Posterior cingulate gyrus (tissue), 11 donors: ENCODE measurements at regions of chr9 and their contacts with region 1.

Region 1: DNA sequence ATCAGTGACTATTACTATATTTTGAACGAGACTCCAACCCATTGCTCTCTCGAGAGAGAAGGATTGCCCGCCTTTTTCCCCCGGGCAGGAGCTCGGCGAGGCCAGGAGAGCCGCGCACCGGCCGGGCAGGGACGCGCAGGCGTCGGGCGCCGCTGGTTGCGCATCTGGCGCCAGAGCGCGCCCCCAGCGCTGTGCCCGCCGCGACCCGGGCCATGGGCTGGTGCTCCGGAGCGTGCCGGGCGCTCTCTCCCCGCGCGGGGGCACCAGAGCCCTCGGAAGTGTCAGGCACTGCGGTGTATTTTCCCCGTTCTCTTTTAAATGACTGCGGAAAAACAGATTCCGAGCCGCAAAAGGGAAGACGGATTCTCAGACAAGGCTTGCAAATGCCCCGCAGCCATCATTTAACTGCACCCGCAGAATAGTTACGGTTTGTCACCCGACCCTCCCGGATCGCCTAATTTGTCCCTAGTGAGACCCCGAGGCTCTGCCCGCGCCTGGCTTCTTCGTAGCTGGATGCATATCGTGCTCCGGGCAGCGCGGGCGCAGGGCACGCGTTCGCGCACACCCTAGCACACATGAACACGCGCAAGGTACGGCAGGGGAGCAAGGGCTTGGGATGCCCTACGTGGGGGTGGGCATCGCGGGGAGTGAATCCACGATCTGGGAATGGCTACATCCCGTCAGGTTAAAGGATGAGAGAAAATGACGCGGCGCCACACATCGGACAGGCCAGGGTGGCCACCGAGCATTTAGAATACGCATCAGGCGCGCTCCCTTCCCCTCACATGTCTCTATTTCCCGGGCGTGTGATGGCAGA is 1.1 kb upstream of the NTRK2 start:
- DNase-seq: peak; percentile 79 to 97 (median 84)

Region 2: DNA sequence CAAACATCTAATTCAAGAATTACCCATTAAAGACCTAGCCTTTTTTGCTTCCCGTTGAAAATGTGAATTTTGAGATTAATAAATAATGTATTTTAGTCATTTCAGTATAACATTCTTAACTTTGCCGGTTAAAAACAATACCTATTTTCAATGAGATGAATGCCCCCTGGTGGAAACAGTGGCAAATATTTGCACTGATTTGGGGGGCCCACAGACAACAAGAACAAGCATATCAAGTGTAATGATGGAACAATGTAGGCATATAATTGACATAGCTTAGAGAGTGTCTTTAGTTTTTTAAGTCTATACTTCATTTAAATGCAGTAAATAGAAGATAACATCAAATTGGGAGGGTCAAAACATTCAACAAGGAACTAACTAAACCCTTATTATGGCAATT is 113.1 kb after region 1 on chr9:
- intact Hi-C with region 1: loop called (anchors 5 kb)
- DNase-seq: no peak

Region 3: DNA sequence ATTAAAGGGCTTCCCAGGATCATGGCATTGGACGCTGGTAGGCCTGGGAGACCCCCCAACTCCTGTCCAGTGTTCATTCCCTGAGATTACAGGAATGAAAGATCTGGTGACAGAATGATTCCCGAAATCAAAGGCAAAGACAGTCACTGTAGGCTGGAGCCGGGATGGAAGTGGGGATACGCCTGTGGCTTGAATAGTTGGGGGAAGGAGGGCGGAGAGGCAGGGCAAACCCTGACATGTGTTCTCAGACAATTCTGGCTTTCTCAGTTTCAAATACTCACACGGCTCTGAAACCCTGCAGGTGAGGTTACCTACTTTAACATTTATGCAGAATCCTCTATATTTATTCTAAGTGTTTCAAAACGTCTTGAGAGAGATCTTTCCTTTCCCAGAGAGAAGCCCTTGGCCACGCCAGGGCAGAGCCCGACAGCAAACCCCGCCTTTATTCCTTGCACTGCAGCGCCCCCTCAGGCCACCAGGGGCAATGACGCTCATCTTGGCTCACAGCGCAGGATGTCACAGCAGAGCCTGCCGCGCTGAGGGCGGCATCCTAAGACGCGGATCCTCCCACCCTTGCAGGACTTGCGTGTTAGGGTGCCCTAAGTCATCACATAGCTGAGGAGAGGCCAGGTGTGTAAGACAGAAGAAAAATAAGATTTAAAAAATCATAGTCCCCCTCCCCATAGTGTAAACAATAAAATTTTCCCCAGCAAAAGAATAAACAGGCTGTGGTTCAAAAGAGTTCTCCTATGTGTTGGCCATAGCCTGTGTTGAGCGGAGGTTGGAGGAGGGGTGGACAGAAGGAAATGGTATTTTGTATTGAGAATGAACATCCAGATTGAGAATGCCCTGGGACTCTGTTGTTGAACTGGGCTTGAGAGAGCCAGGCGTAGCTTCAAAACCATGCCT is 285.6 kb after region 1 on chr9:
- intact Hi-C with region 1: loop called (anchors 2 kb)
- DNase-seq: peak; percentile 74 to 97 (median 88)

Region 4: GRCh38 chr9:85040821-85041465 is 372.5 kb after region 1 on chr9:
- intact Hi-C with region 1: loop called (anchors 10 kb)
- DNase-seq: peak; percentile 65 to 98 (median 82)

Region 5: DNA sequence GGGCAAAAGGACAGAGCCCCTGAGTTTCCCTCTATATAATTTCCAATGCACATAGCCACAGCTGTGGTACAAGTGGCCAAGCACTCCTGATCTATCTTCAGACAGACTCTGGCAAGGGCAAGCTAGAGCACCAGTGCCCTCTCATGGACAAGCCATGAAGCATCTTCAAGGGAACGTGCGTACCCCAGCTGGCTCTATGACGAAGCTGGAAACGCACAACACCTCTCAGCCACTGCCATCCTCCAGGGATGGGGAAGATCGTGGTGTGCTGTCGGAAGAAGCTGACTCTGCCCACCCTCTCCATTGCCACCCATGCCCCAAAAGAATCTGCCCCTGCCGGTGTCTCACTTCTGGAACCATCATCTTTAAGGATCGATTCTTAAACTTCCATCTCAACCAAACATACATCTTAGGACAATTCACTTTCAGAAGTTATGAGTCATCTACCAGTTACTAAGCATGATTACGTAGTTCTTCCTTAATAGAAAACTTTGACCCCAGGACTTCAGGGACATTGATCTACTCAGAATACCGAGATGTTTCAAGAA is 590.5 kb after region 1 on chr9:
- intact Hi-C with region 1: loop called (anchors 1 kb)
- DNase-seq: peak; percentile 68 to 97 (median 82)

Region 6: DNA sequence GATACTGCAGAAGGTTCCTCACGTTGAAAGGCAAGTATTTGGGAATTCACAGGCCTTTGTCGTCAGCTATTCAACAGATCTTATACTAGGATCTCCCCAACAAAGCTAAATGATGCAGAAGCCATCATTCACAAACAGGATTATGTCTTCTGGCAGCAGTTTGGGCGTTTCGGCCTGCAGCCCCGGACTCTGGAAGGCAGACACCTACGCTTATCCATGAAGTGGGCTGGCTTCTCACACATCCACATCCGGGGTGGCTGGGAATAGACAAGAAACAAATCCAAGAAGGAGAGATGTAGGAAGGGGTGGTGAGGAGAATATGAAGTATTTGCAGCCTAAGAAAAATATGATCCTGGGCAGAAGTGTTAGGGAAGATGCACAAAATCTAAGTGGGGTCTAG is 601.4 kb after region 1 on chr9:
- intact Hi-C with region 1: no loop called
- DNase-seq: peak in 6 of 10 donors; percentile 12 to 87 (median 62)

Region 7: DNA sequence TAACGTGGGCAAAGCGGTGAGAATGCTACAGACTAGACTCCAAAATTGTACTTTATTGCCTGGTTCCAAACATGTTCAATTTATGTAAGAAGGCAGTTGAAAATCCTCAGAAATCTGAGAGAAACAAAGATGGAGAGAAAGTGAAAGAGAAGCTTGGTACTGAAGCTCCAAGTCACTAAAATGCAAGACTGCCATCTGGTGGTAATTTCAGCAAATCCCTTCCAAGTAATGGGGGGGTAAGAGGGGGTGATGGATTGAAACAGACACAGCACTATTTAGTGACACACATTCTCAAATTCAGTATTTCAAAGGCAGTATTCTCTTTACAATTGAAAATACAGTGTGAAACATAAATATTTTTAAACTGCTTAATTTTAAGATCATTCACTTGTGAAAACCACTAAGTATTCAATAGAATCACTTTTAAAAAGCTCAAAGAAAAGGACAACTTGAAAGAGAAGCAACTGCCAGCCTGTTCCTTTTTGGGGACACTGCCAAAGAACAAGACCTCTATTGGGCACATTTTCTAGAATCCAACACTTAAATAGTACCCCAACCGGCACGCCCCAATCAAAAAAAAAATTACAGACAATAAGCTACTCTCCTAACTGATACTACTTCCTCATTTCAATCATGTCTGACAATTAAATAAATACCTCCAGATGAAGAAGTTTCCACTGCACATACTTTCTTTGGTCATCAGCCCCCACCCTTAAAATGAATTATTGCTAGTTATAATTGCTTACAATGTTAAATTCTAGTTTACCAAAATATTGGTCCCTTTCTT is 941.9 kb after region 1 on chr9:
- intact Hi-C with region 1: loop called (anchors 5 kb)
- DNase-seq: peak in 1 of 10 donors; percentile 54